ENCODE measurements at regions of chr16 and their contacts with region 1.

Region 1: DNA sequence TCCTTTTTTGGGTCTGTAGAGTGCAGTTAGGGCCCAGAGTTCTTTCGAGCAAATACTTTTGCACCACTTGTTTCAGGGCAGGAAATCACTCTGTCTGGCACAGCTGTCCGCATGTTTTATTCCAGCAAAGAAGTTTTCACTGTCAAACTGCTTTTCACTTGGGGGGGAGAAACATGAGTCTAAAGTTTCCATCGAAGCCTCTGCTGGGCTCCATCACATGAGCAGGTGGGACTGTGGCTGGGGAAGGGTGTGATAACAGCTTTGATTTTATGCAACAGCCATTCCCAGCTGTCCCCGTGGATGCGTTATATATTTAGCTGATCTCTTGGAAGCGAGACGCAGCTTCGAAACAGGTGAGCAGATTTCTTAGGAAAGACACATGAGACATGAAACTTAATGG is 288.6 kb downstream of the SNX29 start:
- DNase-seq: no peak
- H3K4me3 ChIP-seq: no peak overlapping the region
- H3K27ac ChIP-seq: no peak overlapping the region
- H3K27me3 ChIP-seq: no peaks in the 10 kb centered on the region
- CTCF ChIP-seq: no peak

Region 2: DNA sequence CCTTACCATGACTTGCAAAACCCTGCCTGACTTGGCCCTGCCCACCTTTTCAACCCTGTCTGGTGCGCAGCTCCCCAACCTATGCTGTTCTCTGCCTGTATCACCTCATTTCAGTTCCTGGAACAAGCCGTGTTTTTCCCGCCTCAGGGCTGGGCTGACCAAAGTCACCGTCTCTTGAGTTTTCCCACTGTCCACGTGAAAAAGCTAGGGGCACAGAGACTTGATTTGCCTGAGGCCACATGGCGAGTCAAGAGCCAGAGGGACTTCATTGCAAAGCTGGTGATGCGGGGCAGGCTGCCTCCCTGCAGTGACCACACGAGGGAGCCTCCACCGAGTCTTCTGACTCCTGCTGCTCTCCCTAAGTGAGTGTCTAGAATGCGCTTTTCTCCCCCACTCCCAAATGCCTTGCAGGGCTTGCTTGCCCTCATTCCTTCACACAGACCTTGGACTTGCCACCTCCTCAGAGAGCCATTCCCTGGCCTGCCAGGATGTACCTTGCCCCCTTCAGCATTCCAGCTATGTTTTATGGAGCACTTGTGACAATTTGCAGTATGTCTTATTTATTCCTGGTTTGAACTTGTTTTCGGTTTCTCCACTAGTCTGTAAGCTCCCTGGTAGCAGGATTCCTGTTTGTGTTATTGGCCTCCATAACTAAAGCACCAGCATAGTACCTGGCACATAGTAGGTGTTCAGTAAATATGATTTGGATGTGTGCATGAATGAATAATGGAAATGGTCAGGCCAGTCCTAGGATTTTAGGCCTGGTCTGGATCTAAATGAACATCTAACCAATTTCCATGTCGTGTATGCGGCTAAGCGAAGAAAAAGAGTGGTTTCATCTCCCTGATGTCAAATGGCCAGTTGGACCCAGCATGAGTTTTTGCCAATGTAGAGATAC is 36.3 kb before region 1 on chr16:
- intact Hi-C with region 1: loop called in 1 of 2 experiments (anchors 2 kb)
- DNase-seq: peak; percentile 23 to 78 (median 74)
- H3K4me3 ChIP-seq: no peak overlapping the region
- H3K27ac ChIP-seq: no peak overlapping the region
- H3K27me3 ChIP-seq: no peaks in the 10 kb centered on the region
- CTCF ChIP-seq: peak in 55 of 56 donors; percentile 16 to 84 (median 72)

Measured in dorsolateral prefrontal cortex (tissue), 120 donors.